ENCODE measurements at regions of chr9 and their contacts with region 1.

Region 1: GRCh38 chr9:71638627-71639026 is 129.7 kb downstream of the CEMIP2 start:
- DNase-seq: peak; percentile 30 to 55 (median 42)
- H3K4me3 ChIP-seq: peak overlapping the region in 1 of 2 donors; percentile 36
- H3K4me3 Mint-ChIP-seq: peak overlapping the region; percentile 56 to 87 (median 86)
- H3K27ac ChIP-seq: no peak overlapping the region
- H3K27ac Mint-ChIP-seq: peak overlapping the region in 5 of 7 donors; percentile 78 to 96 (median 91)
- H3K4me1 ChIP-seq: peaks cover 20% of the 10 kb centered on the region
- H3K4me1 Mint-ChIP-seq: peaks cover 23 to 32% (median 25%) of the 10 kb centered on the region in 4 donors
- H3K27me3 ChIP-seq: no peaks in the 10 kb centered on the region
- H3K27me3 Mint-ChIP-seq: no peaks in the 10 kb centered on the region

Region 2: GRCh38 chr9:71465289-71465791 is 173.3 kb before region 1 on chr9:
- CTCF ChIA-PET with region 1: no interaction called
- POLR2A ChIA-PET with region 1: no interaction called
- intact Hi-C with region 1: no loop called
- DNase-seq: no peak
- H3K4me3 ChIP-seq: no peak overlapping the region
- H3K4me3 Mint-ChIP-seq: no peak overlapping the region
- H3K27ac ChIP-seq: no peak overlapping the region
- H3K27ac Mint-ChIP-seq: no peak overlapping the region
- H3K4me1 ChIP-seq: no peaks in the 10 kb centered on the region
- H3K4me1 Mint-ChIP-seq: no peaks in the 10 kb centered on the region
- H3K27me3 ChIP-seq: no peaks in the 10 kb centered on the region
- H3K27me3 Mint-ChIP-seq: peaks cover 0 to 3% of the 10 kb centered on the region in 2 donors

Region 3: GRCh38 chr9:71628247-71628646 is 10.4 kb before region 1 on chr9:
- CTCF ChIA-PET with region 1: interaction called, 20 read pairs
- POLR2A ChIA-PET with region 1: interaction called, 3 read pairs
- intact Hi-C with region 1: no loop called
- DNase-seq: peak in 4 of 5 donors; percentile 22 to 34 (median 25)
- H3K4me3 ChIP-seq: no peak overlapping the region
- H3K4me3 Mint-ChIP-seq: no peak overlapping the region
- H3K27ac ChIP-seq: no peak overlapping the region
- H3K27ac Mint-ChIP-seq: no peak overlapping the region
- H3K4me1 ChIP-seq: no peaks in the 10 kb centered on the region
- H3K4me1 Mint-ChIP-seq: peaks cover 0 to 2% (median 0%) of the 10 kb centered on the region in 4 donors
- H3K27me3 ChIP-seq: no peaks in the 10 kb centered on the region
- H3K27me3 Mint-ChIP-seq: no peaks in the 10 kb centered on the region

Region 4: DNA sequence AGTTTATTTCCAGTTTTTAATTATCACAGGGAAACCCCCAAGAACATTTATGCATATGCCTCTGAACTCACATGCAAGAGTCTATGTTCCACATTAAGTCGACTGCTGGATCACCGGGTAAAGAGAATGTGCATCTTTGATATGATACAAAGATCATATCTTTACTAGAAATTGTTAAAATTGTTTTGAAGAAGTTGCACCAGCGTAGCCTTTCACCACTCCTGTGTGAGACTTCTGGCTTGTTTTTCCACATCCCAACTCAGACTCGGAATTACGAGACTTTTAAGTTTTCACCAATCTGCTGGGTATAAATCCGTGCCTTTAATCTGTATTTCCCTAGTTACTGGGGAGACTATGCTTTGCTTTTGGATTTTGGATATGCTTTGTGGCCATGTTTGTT is 16.5 kb after region 1 on chr9:
- CTCF ChIA-PET with region 1: no interaction called
- POLR2A ChIA-PET with region 1: no interaction called
- intact Hi-C with region 1: no loop called
- DNase-seq: no peak
- H3K4me3 ChIP-seq: no peak overlapping the region
- H3K4me3 Mint-ChIP-seq: no peak overlapping the region
- H3K27ac ChIP-seq: no peak overlapping the region
- H3K27ac Mint-ChIP-seq: no peak overlapping the region
- H3K4me1 ChIP-seq: no peaks in the 10 kb centered on the region
- H3K4me1 Mint-ChIP-seq: peaks cover 0 to 4% (median 2%) of the 10 kb centered on the region in 4 donors
- H3K27me3 ChIP-seq: no peaks in the 10 kb centered on the region
- H3K27me3 Mint-ChIP-seq: no peaks in the 10 kb centered on the region

Region 5: GRCh38 chr9:71683598-71684235 is 45.1 kb after region 1 on chr9:
- CTCF ChIA-PET with region 1: interaction called, 5 read pairs
- POLR2A ChIA-PET with region 1: interaction called, 11 read pairs
- intact Hi-C with region 1: loop called (anchors 5 kb)
- DNase-seq: no peak
- H3K4me3 ChIP-seq: no peak overlapping the region
- H3K4me3 Mint-ChIP-seq: peak overlapping the region; percentile 31 to 79 (median 69)
- H3K27ac ChIP-seq: no peak overlapping the region
- H3K27ac Mint-ChIP-seq: peak overlapping the region; percentile 8 to 90 (median 72)
- H3K4me1 ChIP-seq: peaks cover 37% of the 10 kb centered on the region
- H3K4me1 Mint-ChIP-seq: peaks cover 36 to 59% (median 48%) of the 10 kb centered on the region in 4 donors
- H3K27me3 ChIP-seq: no peaks in the 10 kb centered on the region
- H3K27me3 Mint-ChIP-seq: no peaks in the 10 kb centered on the region